HepG2 (cell line): ENCODE measurements at regions of chr5 and their contacts with region 1.

Region 1: GRCh38 chr5:119302916-119303897 is 52.6 kb upstream of the TNFAIP8 start:
- DNase-seq: peak; percentile 97
- ATAC-seq: peak; percentile 98
- H3K4me3 ChIP-seq: peak overlapping the region in 2 of 3 experiments; percentile 1 to 5; a peak in 3 of 6 replicates
- H3K27ac ChIP-seq: peak overlapping the region; percentile 60
- H3K4me1 ChIP-seq: peaks cover 57% of the 10 kb centered on the region
- H3K27me3 ChIP-seq: no peaks in the 10 kb centered on the region
- CTCF ChIP-seq: peak; percentile 35; the same call in 1 of the 2 replicates
- EP300 ChIP-seq: peak in 1 of 2 experiments; percentile 70; a peak in 2 of 4 replicates
- POLR2A ChIP-seq: peak in 1 of 2 experiments; percentile 67; a peak in 1 of 4 replicates
- RAD21 ChIP-seq: no peak

Region 2: DNA sequence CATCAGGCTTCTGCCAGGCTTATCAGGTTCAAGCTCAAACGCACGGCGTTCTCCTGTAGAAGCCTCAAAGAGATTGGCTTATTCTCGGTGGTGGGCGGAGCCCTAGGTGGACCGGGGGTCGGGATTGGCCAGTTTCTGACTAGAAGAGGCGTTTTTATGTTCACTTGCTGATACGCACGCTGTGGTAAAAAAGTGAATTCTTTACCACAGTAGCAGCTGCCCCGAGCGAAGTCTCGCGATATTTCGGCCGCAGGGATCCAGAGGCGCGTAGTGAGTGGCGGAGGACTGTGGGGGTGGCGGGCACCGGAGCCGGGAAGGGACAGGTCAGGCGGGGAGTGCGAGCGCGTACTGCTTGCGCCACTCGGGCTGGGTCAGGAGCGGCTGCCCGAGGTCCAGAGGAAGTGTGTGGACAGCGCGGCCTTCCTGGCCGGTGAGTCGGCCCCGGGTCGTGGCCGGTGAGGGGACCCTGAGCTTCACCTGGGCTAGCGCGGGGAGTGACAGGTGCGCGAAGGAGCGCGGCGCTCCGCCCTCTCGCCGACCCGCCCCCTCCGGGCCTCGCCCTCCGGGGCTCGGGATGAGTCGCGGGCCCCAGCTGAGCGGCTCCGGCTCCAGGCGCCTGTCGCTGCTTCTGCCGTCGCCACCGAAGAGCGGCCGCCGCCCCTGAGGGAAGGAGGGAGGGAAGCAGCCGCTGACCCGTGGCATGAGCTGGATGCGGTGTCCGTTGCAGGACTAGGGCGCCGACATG is 232.2 kb before region 1 on chr5 and contains the start of gene DMXL1:
- CTCF ChIA-PET with region 1: no interaction called
- POLR2A ChIA-PET with region 1: interaction called, 9 read pairs
- in situ Hi-C with region 1: no loop called
- intact Hi-C with region 1: loop called (anchors 2 kb)
- DNase-seq: peak; percentile 98
- ATAC-seq: peak; percentile 91
- H3K4me3 ChIP-seq: peak within 1 kb of the TSS; percentile 91 to 93 (median 92)
- H3K27ac ChIP-seq: peak within 1 kb of the TSS; percentile 93
- H3K4me1 ChIP-seq: peaks cover 37% of the 10 kb centered on the region
- H3K27me3 ChIP-seq: no peaks in the 10 kb centered on the region; a peak in 1 of 5 replicates
- CTCF ChIP-seq: no peak; the same call in 1 of the 2 replicates
- EP300 ChIP-seq: no peak
- POLR2A ChIP-seq: peak; percentile 82
- RAD21 ChIP-seq: peak; percentile 53; the same call in 1 of the 2 replicates
- total RNA-seq, gene DMXL1: 18.6 and 22.9 TPM in 2 replicates

Region 3: GRCh38 chr5:119218830-119219782 is 84.1 kb before region 1 on chr5:
- CTCF ChIA-PET with region 1: no interaction called
- POLR2A ChIA-PET with region 1: no interaction called
- in situ Hi-C with region 1: no loop called
- intact Hi-C with region 1: loop called (anchors 5 kb)
- DNase-seq: peak; percentile 18
- ATAC-seq: peak; percentile 60
- H3K4me3 ChIP-seq: no peak overlapping the region
- H3K27ac ChIP-seq: no peak overlapping the region
- H3K4me1 ChIP-seq: peaks cover 7% of the 10 kb centered on the region
- H3K27me3 ChIP-seq: no peaks in the 10 kb centered on the region
- CTCF ChIP-seq: no peak
- EP300 ChIP-seq: no peak
- POLR2A ChIP-seq: no peak
- RAD21 ChIP-seq: no peak